Cardiac septum (tissue), 1 donor: ENCODE measurements at regions of chr17 and their contacts with region 1.

Region 1: DNA sequence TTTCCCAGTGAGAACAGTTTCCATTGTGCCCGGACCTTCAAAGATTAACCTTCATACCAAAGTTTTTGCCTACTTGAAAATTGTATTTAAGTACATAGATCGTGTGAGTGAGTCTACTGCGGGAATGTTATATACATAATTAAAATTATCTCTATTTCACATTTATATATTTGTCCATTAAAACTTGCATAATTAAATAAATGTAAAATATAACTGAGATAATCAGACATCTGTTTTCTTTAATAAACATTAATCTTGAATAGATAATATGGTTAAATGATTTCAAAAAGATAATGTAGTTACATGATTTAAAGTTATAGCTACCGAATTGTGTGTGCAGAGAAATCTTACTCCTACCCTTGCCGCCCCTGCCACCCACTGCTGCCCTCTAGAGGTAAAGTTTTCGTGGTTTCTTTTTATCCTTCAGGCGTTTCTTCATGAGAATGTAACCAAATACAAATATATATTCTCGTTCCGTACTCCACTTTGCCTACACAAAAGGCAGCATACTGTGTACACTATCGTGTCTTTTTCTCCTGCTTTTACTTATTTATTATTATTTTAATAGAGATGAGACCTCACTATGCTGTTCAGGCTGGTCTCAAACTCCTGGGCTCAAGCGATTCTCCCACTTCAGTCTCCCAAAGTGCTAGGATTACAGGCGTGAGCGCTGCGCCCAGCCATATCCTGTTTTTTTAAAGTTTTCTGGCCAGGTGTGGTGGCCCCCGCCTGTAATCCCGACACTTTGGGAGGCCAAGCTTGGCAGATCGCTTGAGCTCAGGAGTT is 35.6 kb downstream of the RPA1 start:
- DNase-seq: no peak

Region 2: GRCh38 chr17:1661045-1661444 is 204.4 kb before region 1 on chr17:
- intact Hi-C with region 1: loop called (anchors 10 kb)
- DNase-seq: no peak